Cardiac septum (tissue), 1 donor: ENCODE measurements at regions of chr14 and their contacts with region 1.

Region 1: DNA sequence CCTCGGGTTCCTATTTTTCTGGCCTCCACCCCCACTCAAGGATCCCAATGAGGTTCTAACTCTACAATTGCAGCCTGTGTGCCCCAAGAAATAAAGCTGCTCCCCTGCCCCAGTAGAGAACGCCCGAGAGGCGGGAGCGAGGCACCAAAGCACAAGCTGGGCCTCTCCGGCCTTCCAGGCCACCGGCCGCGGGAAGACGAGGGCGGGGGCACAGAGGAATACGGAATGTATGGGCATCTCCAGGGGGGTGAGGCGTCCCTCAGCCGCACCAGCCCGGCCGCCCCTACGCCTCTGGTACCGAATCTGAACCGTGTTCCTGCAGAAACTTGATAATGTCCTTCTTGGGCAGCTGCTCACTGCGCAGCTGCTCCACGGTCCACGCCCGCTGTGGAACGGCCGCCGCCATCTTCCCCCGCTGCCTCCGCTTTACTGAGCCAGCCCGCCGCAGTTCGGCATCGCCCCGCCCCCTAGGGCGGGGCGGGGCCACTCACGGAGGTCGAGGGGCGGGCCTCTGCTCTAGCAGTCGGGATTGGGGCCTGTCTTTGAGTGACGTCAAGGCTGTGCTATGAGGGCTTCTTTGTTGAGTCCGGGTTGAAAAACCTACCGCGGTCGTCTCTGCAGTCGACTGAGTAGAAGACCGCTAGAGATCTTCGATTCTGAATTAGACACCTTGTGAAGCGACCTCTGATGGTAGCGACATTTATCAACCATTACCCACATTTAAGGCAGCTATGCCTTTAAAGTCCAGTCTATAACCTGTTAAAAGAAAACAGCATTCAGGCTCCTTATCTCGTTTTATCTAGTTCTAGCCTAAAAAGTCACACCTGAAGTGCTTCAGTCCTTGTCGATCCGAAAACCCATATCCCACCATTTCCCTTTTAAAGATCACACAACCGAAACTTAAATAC is at the start of gene FKBP3:
- DNase-seq: peak; percentile 98
- total RNA-seq, gene FKBP3: 81.4 TPM

Region 2: DNA sequence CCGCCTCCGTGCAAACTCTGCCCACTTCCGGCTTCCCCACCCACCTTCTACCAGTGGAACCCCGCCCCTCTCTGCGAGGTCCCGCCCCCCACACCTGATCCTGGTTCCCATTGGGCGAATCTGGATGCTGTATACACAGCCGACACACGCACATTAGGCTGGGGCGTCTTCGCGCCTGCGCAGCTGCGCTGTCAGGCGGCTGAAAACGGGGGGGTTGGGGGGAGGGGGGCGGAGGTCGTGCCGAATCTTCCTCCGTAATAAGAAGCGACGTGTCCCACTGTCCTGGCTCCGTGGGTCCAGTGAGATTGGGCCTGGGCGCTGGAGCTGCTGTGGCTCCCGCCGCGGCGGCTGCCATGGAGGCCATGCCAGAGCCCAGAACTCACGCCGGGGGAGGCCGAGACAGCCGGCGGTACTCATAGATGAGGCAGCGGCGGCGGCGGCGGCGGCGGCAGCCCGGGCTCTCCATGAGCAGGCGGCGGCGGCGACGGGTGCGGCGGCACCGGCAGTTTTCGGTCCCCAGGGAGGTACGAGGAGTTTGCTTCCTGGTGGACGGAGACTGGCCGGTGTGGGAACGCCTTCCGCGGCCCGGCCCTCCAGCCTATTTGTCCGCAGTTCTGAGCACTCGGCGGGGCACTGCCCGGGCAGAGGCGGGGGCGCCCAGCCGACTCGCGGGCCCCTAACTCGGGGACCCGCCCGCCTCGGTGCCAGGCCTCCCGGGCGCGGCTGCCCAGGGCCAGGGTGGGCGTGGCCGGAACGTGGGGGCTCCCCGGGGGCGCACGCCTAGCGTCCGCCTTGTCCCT is 237.1 kb before region 1 on chr14:
- intact Hi-C with region 1: loop called (anchors 5 kb)
- DNase-seq: peak; percentile 99

Region 3: DNA sequence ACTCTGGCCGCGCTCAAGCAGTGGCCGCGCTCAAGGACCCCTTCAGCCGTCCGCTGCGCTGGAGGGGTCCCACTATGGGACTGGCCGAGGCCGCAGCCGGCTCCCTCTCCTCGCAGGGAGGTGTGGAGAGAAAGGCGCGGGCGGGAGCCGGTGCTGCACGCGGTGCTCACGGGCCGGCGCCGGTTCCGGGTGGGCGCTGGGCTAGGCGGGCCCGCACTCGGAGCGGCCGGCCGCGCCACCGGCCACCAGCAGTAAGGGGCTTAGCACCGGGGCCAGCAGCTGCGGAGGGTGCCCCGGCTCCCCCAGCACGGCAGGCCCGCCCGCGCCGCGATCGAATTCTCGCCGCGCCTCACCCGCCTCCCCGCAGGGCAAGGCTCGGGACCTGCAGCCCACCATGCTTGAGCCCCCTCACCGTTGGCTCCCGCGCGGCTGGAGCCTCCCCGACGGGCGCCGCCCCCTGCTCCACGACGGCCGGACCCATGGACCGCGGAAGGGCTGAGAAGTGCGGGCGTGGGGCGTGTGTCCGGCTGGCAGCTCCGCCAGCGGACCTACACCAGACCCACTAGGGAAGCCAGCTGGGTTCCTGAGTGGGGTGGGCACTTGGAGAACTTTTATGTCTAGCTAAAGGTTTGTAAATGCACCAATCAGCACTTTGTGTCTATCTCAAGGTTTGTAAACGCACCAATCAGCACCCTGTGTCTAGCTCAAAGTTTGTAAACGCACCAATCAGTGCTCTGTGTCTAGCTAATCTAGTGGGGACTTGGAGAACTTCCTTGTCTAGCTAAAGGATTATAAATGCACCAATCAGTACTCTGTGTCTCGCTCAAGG is 222.1 kb before region 1 on chr14:
- intact Hi-C with region 1: loop called (anchors 5 kb)
- DNase-seq: no peak

Region 4: DNA sequence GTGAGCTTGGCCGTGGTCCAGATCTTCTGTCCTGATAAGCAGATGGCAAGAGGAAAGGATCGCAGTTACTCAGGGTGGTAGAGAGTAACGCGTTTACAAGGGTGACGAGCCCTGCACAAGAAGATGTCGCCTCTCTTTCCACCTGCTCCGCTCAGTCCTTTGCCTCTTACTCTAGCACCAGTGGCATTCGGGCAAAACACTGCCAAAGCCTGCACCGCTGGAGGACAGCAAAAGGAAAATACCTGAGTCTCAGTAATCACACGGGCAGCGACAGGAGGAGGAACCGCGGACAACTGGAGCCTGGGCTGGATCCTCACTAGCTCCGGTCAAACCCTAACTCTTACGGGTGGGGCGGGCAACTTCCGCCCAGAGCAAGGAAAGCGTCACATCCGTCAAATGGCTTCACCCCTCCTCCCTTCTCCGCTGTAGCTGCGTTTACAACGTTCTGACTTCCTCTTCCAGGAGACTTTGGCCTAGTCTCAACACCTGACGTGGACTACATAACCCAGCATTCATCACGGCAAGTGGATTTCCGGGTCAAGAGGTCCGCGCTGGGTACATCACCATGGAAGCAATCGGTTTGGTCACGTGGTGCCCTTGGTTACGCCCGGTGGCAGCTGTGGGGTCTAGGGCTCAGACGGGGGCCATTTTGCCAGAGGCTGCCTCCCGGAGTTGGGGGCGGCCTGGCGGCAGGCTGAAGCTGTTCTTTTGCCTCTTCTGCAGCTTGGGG is 172.5 kb before region 1 on chr14 and contains the starts of genes KLHL28 and TOGARAM1:
- intact Hi-C with region 1: loop called (anchors 1 kb)
- DNase-seq: peak; percentile 98
- total RNA-seq, gene KLHL28: 11.2 TPM
- total RNA-seq, gene TOGARAM1: 16.3 TPM

Region 5: GRCh38 chr14:45083971-45084722 is 50.2 kb before region 1 on chr14 and contains the start of gene PRPF39:
- intact Hi-C with region 1: loop called (anchors 2 kb)
- DNase-seq: peak; percentile 99
- total RNA-seq, gene PRPF39: 14.3 TPM

Region 6: GRCh38 chr14:45156060-45156459 is 21.8 kb after region 1 on chr14:
- intact Hi-C with region 1: no loop called
- DNase-seq: no peak

Region 7: DNA sequence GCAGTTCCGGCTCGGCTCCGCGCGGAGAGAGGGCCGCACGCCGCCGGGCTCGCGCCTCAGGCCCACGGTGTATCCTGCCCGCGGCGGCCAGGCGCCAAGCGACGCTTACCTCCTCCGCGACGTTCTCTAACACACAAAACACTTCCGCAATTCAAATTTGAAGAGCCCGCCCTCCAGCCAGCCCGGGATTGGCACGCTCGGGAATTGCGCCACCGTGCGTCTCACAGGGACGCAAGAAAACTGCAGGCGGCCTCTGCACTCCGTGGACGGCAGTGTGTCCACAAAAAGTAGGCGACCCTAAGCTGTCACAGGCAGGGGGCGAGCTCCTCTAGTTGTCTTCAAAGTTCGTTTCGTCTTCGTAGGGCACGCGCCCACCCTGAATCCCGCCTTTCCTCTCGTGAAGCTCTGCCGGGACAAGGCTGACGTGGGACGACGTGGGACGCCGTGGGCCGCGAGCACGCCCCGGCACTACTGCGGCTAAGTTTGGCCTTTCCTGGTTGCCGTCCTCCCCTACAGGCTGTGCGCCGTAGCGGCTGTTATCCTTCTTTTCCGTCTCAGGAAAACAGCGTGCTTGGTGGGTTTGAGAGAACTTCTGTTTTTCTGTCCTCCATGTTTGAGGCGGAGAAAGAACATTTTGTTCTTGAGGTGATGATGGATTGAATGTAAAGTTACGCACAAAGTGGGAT is 118.9 kb after region 1 on chr14 and contains the start of gene MIS18BP1:
- intact Hi-C with region 1: loop called (anchors 5 kb)
- DNase-seq: peak; percentile 97
- total RNA-seq, gene MIS18BP1: 9.7 TPM

Region 8: DNA sequence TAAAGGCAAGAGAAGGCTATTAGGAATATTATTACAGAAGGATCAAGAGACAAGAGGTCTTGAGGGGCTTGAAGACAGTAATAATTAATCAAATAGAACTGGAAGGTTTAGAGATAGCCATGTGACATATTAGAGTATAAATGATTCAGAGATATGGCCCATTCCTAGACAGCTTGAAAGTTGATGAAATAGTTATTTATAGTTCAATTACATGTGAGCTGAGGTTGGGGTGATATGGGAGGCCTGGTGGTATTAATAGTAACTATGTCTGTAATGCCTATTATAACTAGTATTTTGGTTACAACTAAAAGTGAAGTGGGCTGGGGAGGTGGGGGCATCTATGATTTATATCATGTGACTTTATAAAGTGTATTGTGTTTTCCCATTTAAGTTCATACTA is 132.8 kb after region 1 on chr14:
- intact Hi-C with region 1: loop called (anchors 5 kb)
- DNase-seq: no peak

Region 9: GRCh38 chr14:45486599-45486998 is 352.3 kb after region 1 on chr14:
- intact Hi-C with region 1: no loop called
- DNase-seq: no peak